ENCODE measurements at regions of chr16 and their contacts with region 1.

Region 1: DNA sequence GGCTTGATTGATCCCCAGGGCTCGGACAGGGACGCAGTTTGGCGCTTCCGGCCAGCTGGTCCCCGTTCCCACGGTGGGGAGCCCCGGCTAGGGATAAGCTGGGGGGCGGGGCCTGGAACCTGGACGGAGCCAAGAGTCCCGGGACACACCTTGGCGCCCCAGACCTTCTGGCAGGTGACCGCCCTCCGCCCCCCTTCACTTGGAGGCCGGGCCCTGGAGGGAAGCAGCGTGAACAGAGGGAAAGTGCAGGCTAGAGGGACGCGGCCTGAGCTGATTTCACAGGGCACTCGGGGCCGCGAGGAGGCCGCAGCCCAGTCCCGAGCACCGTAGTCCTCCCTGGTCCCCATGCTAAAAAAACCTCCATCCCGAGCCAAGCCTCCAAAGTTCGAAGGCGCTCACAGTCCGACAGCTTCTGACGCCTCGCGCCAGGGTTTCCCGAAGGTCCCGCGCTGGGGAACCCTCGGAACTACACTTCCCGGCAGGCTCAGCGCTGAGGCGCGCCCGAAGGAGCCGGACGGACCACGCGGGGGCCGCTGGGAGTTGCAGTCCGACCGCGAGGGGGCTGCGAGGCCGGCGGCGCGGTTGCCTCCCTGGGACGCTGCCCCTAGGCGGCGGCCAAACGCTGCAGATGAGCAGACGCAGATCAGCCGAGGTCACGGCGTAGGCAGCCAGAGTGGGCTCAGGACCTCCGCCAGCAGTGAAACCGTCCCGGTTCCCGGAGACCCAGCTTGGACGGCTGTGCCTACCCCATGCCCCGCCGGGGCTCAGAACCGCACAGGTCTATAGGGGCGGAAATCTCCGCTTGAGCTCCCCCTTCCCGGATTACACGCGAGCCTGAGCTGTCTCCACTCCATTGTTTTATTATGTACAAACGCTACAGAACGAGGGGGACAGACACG is at the start of gene TBX6:
- DNase-seq: peak; percentile 86
- H3K27ac ChIP-seq: peak within 1 kb of the TSS; percentile 79
- CTCF ChIP-seq: peak; percentile 89

Region 2: GRCh38 chr16:30079480-30079879 is 12.2 kb before region 1 on chr16:
- CTCF ChIA-PET with region 1: interaction called, 3 read pairs
- POLR2A ChIA-PET with region 1: interaction called, 15 read pairs
- DNase-seq: no peak
- H3K27ac ChIP-seq: peak overlapping the region; percentile 9; the same call in 1 of the 2 replicates
- CTCF ChIP-seq: no peak

Region 3: DNA sequence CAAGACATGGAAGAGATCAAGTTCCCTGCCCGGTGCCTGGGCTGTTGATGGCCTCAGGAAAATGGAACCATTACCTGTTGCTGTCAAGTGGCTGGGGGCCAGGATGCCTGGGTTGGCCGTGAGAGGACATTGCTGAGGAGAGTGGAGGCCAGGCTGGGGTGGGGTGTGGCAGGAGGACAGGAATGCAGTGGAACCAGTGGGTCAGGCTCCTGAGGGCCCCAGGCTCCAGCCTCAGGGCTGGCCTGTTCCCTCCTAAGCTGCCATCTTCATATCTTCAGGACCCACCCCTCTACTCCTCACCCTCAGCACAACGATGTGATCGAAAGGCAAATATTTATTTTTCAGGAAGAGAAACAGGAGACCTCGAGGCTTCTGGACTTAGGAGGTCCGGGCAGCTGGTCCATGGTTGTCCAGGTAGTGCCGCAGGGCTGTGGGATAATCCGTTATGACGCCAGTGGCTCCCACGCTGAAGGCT is 12.8 kb after region 1 on chr16:
- CTCF ChIA-PET with region 1: interaction called, 16 read pairs
- POLR2A ChIA-PET with region 1: no interaction called
- DNase-seq: peak; percentile 26
- H3K27ac ChIP-seq: 0 out of 2 replicates have a peak overlapping the region, but pooled peaks have one; percentile 2
- CTCF ChIP-seq: no peak

Region 4: DNA sequence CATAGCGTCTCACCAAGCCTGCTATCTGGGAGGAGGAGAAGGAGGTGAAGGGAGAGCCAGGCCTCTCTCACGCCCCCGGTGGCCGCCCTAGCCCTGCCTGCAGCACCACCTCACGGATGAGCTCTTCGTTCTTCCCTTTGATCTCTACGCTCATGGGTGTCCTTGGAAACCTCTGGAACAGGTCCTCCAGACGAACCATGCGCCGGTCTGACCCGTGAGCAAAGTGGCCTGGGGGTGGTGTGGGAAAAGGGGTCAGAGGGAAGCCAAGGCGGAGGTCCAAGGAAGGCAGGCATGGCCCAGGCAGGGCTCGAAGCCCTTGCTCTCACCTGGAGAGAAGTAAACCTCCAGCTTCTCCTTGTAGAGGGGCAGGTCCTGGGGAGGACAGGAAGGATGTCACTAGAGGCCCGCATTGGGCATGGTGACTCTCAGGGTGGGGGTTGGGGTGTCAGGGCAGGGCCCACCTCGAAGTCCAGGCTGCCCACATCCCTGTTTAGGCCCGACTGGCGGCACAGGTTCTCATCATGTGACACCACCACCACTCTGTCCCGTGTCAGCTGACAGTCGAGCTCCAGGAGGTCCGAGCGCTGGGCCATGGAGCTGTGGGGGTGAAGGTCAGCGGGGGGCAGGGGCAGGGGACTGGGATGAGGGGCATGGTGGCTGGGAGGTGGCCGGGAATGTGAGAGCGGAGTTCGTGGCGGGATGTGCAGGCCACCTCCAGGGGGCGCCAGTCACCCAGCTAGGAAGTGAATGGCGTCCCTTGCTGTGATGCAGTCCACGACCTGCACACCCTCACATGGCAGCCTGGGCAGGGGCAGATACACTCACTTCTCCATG is 20.7 kb after region 1 on chr16:
- CTCF ChIA-PET with region 1: interaction called, 11 read pairs
- POLR2A ChIA-PET with region 1: no interaction called
- DNase-seq: no peak
- H3K27ac ChIP-seq: no peak overlapping the region
- CTCF ChIP-seq: peak; percentile 66

Region 5: DNA sequence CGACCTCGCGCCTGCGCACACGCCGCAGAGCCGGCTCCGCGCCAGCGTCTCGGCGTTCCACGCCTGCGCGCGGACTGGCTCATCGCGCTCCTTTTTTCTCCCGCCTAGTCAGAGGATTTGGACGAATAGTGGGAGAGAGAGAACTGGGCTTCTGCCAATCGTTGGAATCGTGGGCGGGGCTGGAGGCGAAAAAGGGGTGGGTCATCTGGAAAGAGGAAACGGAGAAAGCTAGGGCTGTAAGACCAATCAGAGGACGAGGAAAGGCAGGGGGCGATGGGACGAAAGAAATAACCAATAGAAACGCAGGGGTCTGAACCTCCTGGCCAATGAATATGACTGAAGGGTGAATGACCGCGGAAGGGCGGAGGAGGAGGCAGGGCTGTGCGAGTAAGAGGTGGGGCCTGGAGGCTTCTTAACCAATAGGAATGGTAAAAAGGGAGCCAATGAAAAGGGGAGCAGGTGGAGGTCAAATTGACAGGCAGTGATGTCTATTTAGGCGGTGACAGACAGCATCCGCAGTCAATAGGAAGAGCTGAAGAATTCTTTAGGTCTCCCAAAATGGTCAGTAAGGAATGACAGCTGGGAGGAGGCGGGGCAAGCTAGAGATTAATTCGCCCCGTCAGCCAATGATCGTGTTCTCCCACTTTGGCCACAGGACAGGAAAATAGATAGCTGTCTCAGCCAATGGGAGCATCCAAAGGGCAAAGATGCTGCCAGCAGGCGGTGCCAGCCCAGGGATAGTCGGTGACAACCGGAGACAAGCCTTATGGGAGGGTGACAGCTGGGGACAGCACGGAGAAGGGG is 278.9 kb after region 1 on chr16 and contains the start of gene TBC1D10B:
- CTCF ChIA-PET with region 1: no interaction called
- POLR2A ChIA-PET with region 1: no interaction called
- DNase-seq: peak; percentile 100
- H3K27ac ChIP-seq: peak within 1 kb of the TSS; percentile 88
- CTCF ChIP-seq: no peak

Measured in RWPE1 (cell line).